Posterior cingulate gyrus (tissue), 11 donors: ENCODE measurements at regions of chr19 and their contacts with region 1.

Region 1: DNA sequence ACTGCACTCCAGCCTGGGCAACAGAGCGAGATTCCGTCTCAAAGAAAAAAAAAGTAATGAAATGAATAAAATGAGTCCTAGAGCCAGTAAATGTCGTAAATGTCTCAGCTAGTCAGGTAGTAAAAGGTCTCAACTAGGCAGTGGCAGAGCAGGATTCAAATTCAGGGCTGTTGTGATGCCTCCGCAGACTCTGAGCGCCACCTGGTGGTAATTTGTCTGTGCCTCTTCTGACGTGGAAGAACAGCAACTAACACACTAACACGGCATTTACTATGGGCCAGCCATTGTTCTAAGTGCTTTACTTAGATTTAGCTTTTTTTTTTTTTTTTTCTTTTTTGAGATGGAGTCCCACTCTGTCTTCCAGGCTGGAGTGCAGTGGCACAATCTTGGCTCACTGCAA is 30.2 kb downstream of the CYP2F1 start:
- DNase-seq: peak in 8 of 10 donors; percentile 26 to 94 (median 70)

Region 2: GRCh38 chr19:40974633-40975037 is 169.8 kb before region 1 on chr19:
- intact Hi-C with region 1: loop called (anchors 10 kb)
- DNase-seq: peak in 8 of 10 donors; percentile 34 to 91 (median 72)